Gastrocnemius medialis (tissue), 4 donors: ENCODE measurements at regions of chr1 and their contacts with region 1.

Region 1: DNA sequence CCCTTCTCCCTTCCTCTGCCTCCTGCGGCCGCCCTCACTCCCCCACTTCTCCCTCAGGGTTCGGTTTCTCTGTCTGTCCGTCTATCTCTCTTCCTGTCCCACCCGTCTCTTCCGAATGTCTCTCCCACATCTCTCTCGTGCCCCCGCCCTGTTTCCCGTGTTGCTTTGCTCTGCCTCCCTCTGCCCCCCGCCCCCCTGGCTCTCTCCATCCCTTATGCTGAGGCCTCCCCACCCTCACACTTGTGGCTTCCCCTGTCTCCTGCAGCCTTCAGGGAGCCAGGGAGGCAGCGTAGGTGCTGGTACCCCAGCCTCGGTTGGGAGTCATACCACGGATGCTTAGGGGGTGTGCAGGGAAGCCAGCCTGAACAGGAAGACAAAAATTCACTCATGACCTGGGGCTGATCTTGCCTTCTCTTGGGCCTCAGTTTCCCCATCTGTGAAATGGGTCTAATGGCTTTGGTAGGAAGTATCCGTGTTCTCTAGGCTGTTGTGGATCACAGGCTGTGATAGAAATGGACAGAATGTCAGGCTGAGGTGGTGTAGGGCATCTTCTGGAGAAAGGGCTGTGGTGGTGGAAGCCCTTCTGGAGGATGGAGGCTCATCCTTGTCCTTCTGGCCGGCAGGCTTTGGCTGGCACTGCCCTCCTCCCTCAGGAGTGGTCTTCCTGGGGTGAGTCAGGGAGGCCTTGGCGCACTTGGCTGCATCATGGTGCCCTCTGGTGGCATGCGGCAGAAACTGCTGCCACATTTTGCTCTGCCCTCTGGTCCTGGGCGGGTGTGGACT is 55.5 kb downstream of the FOXO6 start:
- DNase-seq: peak in 1 of 2 donors; percentile 67
- ATAC-seq: peak in 1 of 2 donors; percentile 25
- H3K4me3 ChIP-seq: no peak overlapping the region
- H3K27ac ChIP-seq: peak overlapping the region in 1 of 4 donors; percentile 88
- H3K4me1 ChIP-seq: peaks cover 38 to 46% of the 10 kb centered on the region in 2 donors
- H3K27me3 ChIP-seq: no peaks in the 10 kb centered on the region
- CTCF ChIP-seq: peak; percentile 90 to 97 (median 93)
- POLR2A ChIP-seq: no peak

Region 2: GRCh38 chr1:41282679-41283317 is 133.9 kb before region 1 on chr1:
- in situ Hi-C with region 1: no loop called
- intact Hi-C with region 1: loop called (anchors 5 kb)
- DNase-seq: no peak
- ATAC-seq: peak in 1 of 2 donors; percentile 71
- H3K4me3 ChIP-seq: no peak overlapping the region
- H3K27ac ChIP-seq: no peak overlapping the region
- H3K4me1 ChIP-seq: no peaks in the 10 kb centered on the region
- H3K27me3 ChIP-seq: no peaks in the 10 kb centered on the region
- CTCF ChIP-seq: peak; percentile 62 to 74 (median 65)
- POLR2A ChIP-seq: no peak

Region 3: DNA sequence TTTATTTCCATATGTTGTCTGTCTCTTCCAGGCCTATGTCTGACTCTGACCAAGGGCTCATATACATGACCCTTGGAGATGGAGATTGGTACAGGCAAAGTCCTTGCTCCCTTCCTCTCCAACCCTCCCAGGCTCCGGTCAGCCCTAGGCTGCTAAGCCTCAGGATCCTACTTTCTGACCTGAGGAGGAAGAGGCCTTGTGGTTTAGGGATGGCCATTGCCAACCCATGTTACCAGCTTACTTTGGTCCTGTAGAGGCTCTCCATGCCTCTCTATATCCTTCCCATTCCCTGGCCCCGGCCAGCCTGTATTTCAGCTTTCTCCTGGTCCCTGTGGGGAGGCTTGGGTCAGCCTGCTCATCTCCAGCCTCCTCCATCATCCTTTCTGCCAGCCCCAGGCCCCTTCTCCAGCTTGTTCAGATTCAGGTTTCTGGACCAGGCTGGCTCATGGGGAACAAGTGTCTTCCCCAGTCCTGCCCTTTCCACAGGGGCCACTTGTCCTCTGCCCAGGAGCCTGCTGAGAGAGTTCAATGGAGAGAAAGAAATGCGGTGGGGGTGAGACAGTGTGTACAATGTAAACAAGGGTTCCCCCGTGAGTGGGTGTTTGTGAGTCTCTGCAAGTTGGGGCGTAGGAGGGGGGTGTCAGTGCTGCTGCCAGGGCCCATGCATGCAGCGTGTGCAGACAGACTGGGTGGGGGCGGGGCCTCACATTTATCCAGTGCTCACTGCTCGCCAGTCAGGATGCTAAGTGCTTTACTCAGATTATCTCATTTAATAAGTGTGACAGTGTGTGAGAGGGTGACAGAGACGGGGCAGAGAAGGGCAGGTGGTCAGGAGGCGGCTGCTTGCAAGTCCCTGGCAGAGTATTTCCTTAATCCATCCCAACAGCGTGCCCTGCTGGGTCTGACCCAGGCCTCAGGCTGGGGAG is 86.8 kb before region 1 on chr1:
- in situ Hi-C with region 1: loop called in 2 of 4 experiments (anchors 5 to 10 kb)
- intact Hi-C with region 1: no loop called
- DNase-seq: no peak
- ATAC-seq: no peak
- H3K4me3 ChIP-seq: no peak overlapping the region
- H3K27ac ChIP-seq: no peak overlapping the region
- H3K4me1 ChIP-seq: no peaks in the 10 kb centered on the region
- H3K27me3 ChIP-seq: no peaks in the 10 kb centered on the region
- CTCF ChIP-seq: no peak
- POLR2A ChIP-seq: no peak

Region 4: GRCh38 chr1:41360993-41361753 is 55.6 kb before region 1 on chr1 and contains the start of gene FOXO6:
- in situ Hi-C with region 1: loop called in 3 of 4 experiments (anchors 5 to 10 kb)
- intact Hi-C with region 1: loop called (anchors 1 kb)
- DNase-seq: peak; percentile 97 to 98
- ATAC-seq: peak; percentile 81 to 90
- H3K4me3 ChIP-seq: peak within 1 kb of the TSS; percentile 57 to 83 (median 59)
- H3K27ac ChIP-seq: peak within 1 kb of the TSS; percentile 74 to 84 (median 78)
- H3K4me1 ChIP-seq: peaks cover 39 to 56% of the 10 kb centered on the region in 2 donors
- H3K27me3 ChIP-seq: no peaks in the 10 kb centered on the region
- CTCF ChIP-seq: peak; percentile 36 to 80 (median 73)
- POLR2A ChIP-seq: peak; percentile 76 to 81
- total RNA-seq, gene FOXO6: 0.20 to 3.9 (median 0.94) TPM

Region 5: GRCh38 chr1:41399145-41399795 is 17.5 kb before region 1 on chr1:
- in situ Hi-C with region 1: no loop called
- intact Hi-C with region 1: loop called (anchors 2 kb)
- DNase-seq: peak; percentile 35 to 84
- ATAC-seq: peak; percentile 61 to 83
- H3K4me3 ChIP-seq: peak overlapping the region in 3 of 4 donors; percentile 14 to 31 (median 23)
- H3K27ac ChIP-seq: peak overlapping the region; percentile 36 to 81 (median 78)
- H3K4me1 ChIP-seq: peaks cover 34 to 41% of the 10 kb centered on the region in 2 donors
- H3K27me3 ChIP-seq: no peaks in the 10 kb centered on the region
- CTCF ChIP-seq: no peak
- POLR2A ChIP-seq: no peak

Region 6: GRCh38 chr1:41496080-41497055 is 79.6 kb after region 1 on chr1:
- in situ Hi-C with region 1: no loop called
- intact Hi-C with region 1: loop called (anchors 5 kb)
- DNase-seq: peak; percentile 90 to 94
- ATAC-seq: peak; percentile 55 to 63
- H3K4me3 ChIP-seq: peak overlapping the region; percentile 38 to 54 (median 42)
- H3K27ac ChIP-seq: peak overlapping the region; percentile 88 to 93 (median 90)
- H3K4me1 ChIP-seq: peaks cover 48 to 49% of the 10 kb centered on the region in 2 donors
- H3K27me3 ChIP-seq: no peaks in the 10 kb centered on the region
- CTCF ChIP-seq: peak in 3 of 5 experiments; percentile 14 to 49 (median 42)
- POLR2A ChIP-seq: peak; percentile 81 to 83

Region 7: DNA sequence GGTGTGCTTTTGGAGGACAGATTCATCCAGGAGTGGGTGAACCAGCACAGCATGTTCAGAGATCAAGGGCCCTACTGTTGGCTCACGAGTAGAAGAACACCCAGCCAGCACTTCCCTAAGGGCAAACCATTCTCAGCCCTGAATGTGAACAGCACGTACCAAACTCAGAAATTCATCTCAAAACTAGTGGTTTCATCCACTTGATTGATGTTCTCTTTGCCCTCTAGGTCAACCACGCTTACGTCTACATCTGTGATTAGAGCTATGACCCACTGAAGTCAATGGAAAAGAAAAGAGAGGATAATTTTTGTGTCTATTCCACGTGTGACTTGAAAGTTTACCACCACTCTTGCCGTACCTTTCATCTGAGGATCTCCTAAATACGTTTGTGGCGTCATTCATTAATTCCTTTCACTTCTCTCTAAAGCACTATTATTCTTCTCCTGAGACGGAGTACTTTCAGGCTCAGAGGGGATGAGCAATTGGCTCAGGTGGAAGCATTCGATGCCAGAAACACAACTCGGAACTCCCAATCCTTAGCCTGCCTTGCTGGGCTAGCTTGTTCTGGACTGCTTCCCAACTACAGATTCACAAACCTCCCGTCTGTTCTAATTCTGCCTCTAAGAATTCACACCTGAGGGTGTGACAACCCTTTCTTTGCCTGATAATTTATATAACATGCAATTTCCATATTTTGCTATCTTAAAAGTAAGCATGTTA is 559.3 kb after region 1 on chr1:
- in situ Hi-C with region 1: no loop called
- intact Hi-C with region 1: no loop called
- DNase-seq: no peak
- ATAC-seq: no peak
- H3K4me3 ChIP-seq: no peak overlapping the region
- H3K27ac ChIP-seq: no peak overlapping the region
- H3K4me1 ChIP-seq: no peaks in the 10 kb centered on the region
- H3K27me3 ChIP-seq: no peaks in the 10 kb centered on the region
- CTCF ChIP-seq: no peak
- POLR2A ChIP-seq: no peak